AG04450 (cell line): ENCODE measurements at regions of chr3 and their contacts with region 1.

Region 1: DNA sequence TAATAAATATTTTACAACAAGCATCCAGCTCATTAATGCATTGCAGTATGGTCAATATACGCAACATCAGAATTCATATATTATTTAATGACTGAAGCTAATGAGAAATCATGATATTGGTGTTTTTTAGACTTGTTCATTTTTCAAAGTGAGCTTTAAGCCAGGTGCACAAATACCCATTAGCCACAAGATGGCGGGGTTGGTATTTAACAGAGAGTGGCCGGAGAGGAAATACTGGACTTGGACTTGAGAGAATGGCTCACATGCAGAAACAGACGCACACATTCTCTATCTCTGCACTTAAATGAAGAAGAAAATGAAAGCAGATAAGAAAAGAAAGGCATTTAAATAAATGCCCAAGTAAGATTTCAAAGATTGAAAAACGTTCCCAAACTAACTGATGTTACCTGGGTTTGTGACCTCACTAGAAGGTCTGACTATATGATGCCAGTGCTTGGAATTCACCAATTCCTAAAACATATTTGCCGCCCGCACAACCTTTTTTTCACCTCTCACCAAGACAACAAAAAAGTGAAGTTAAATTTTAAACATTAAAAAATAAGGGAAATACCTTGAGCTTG is 21.2 kb upstream of the CRBN start:
- DNase-seq: peak; percentile 13
- H3K4me3 ChIP-seq: no peak overlapping the region
- H3K27ac ChIP-seq: no peak overlapping the region
- H3K27me3 ChIP-seq: no peaks in the 10 kb centered on the region
- CTCF ChIP-seq: peak; percentile 69

Region 2: DNA sequence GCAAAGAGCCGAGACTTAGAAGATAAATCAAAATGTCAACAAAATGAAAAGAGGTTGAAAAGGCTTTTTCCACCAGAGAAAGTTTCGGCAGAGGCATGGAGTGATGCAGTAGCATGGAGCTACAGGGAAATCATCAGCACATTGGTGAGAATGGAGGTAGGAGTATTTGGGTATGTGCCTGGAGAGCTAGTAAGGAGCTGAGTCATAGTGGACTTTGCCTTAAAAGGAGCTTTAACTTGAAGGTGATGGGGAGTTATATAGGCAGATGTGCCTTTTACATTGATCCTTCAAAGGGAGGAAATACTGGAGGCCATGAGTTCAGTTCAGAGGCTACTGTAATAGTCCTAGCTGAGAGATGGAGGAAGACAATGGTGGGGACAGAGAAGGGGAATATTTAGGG is 134.8 kb before region 1 on chr3:
- CTCF ChIA-PET with region 1: no interaction called
- POLR2A ChIA-PET with region 1: no interaction called
- DNase-seq: no peak
- H3K4me3 ChIP-seq: no peak overlapping the region
- H3K27ac ChIP-seq: no peak overlapping the region
- H3K27me3 ChIP-seq: peaks cover 2% of the 10 kb centered on the region
- CTCF ChIP-seq: no peak

Region 3: GRCh38 chr3:3179407-3180094 is 21.2 kb before region 1 on chr3 and contains the start of gene CRBN:
- CTCF ChIA-PET with region 1: interaction called, 13 read pairs
- POLR2A ChIA-PET with region 1: no interaction called
- DNase-seq: peak; percentile 43
- H3K4me3 ChIP-seq: peak within 1 kb of the TSS; percentile 94
- H3K27ac ChIP-seq: no peak within 1 kb of the TSS
- H3K27me3 ChIP-seq: no peaks in the 10 kb centered on the region
- CTCF ChIP-seq: peak; percentile 91
- polyA plus RNA-seq, gene CRBN: 30.7 and 44.2 TPM in 2 replicates

Region 4: DNA sequence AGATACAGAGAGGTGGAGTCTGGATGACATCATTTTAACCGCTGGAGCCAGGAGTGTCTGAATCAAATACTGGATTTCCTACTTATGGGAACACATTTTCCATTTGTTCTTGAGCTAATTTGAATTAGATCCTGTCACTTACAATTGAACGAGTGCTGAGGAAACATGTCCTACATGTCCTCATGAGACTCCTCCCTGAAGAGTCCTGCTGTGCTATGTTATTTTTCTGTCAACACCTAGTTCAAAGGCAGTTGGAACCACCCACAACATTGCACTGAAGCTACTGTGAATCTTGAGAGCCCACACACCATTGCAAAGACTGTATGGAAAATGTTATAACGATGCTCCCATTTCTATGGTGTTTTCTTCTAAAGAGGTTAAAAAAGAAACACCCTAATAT is 102.2 kb after region 1 on chr3:
- CTCF ChIA-PET with region 1: no interaction called
- POLR2A ChIA-PET with region 1: no interaction called
- DNase-seq: no peak
- H3K4me3 ChIP-seq: no peak overlapping the region
- H3K27ac ChIP-seq: no peak overlapping the region
- H3K27me3 ChIP-seq: no peaks in the 10 kb centered on the region
- CTCF ChIP-seq: no peak

Region 5: GRCh38 chr3:3403700-3404099 is 203.0 kb after region 1 on chr3:
- CTCF ChIA-PET with region 1: no interaction called
- POLR2A ChIA-PET with region 1: no interaction called
- DNase-seq: no peak
- H3K4me3 ChIP-seq: no peak overlapping the region
- H3K27ac ChIP-seq: no peak overlapping the region
- H3K27me3 ChIP-seq: no peaks in the 10 kb centered on the region
- CTCF ChIP-seq: no peak

Region 6: DNA sequence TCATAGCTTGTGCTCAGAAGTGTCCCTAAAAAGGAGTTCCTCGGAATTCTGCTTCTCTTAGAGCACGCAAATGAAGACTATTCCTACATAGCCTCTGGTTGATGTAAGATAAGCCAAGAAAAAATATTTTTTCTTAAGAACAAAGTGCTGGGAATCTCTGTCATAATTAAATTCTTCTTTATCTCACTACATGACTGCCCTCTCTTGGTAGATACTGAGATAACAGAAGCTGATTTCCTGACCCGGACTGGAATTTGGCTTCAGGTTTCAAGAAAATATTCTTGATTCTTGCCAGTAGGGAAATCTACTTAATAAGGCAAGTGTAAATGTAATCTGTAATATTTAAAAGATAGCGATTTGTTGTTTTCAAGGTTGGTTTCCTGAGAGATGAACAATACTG is 1071.1 kb after region 1 on chr3:
- CTCF ChIA-PET with region 1: interaction called, 37 read pairs
- POLR2A ChIA-PET with region 1: no interaction called
- DNase-seq: no peak
- H3K4me3 ChIP-seq: no peak overlapping the region
- H3K27ac ChIP-seq: no peak overlapping the region
- H3K27me3 ChIP-seq: no peaks in the 10 kb centered on the region
- CTCF ChIP-seq: peak; percentile 40

Region 7: DNA sequence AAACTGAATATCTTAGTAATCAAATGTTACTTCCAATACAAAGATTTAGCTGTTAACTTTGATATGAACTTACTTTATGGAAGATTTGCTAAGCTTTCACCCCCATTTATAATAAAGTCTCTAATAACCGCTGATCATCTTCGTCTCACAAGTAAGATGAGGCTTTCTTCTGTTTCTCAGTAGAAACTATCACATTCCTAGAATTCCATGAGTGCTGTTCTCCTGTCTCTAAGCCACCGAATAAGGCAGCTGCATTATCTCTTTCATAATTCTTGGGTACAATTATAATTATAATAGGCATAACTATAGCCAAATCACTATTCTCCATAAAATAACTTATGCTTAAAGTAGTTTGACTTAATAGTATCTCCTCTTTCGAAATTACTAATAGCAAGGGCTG is 1084.1 kb after region 1 on chr3:
- CTCF ChIA-PET with region 1: interaction called, 74 read pairs
- POLR2A ChIA-PET with region 1: no interaction called
- DNase-seq: no peak
- H3K4me3 ChIP-seq: no peak overlapping the region
- H3K27ac ChIP-seq: no peak overlapping the region
- H3K27me3 ChIP-seq: no peaks in the 10 kb centered on the region
- CTCF ChIP-seq: no peak

Region 8: DNA sequence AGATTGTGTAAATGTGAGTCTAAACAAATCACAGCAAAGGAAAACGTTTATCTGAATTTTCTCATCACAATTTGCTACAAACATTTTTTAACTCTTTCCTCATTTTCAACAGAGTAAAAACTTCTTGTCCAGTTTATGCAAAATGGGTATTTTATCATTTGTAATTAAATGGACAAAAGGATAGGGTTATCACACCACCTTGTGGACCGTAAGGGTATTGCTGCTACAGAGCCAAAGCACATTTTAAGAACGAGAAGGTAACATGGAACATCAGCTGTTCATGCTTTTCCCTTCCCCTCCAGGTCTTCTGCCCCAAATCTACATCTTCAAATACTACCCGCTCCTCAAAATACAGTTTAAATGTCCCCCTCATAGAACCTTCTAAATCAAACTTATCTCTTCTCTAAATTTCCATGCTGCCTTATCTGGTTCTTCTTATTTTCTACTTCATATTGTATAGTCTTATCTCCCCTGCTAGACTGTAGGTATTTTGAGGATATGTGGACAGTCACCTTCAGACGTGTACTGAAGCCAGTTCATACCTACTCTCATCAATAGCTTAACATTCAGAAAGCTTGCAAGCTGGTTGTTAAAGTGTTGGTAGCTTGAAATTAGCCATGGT is 1089.7 kb after region 1 on chr3:
- CTCF ChIA-PET with region 1: interaction called, 74 read pairs
- POLR2A ChIA-PET with region 1: no interaction called
- DNase-seq: no peak
- H3K4me3 ChIP-seq: no peak overlapping the region
- H3K27ac ChIP-seq: no peak overlapping the region
- H3K27me3 ChIP-seq: no peaks in the 10 kb centered on the region
- CTCF ChIP-seq: peak; percentile 93

Region 9: GRCh38 chr3:4297486-4297885 is 1096.8 kb after region 1 on chr3:
- CTCF ChIA-PET with region 1: interaction called, 74 read pairs
- POLR2A ChIA-PET with region 1: no interaction called
- DNase-seq: no peak
- H3K4me3 ChIP-seq: no peak overlapping the region
- H3K27ac ChIP-seq: no peak overlapping the region
- H3K27me3 ChIP-seq: no peaks in the 10 kb centered on the region
- CTCF ChIP-seq: no peak